SK-N-SH (cell line): ENCODE measurements at regions of chr1 and their contacts with region 1.

Region 1: DNA sequence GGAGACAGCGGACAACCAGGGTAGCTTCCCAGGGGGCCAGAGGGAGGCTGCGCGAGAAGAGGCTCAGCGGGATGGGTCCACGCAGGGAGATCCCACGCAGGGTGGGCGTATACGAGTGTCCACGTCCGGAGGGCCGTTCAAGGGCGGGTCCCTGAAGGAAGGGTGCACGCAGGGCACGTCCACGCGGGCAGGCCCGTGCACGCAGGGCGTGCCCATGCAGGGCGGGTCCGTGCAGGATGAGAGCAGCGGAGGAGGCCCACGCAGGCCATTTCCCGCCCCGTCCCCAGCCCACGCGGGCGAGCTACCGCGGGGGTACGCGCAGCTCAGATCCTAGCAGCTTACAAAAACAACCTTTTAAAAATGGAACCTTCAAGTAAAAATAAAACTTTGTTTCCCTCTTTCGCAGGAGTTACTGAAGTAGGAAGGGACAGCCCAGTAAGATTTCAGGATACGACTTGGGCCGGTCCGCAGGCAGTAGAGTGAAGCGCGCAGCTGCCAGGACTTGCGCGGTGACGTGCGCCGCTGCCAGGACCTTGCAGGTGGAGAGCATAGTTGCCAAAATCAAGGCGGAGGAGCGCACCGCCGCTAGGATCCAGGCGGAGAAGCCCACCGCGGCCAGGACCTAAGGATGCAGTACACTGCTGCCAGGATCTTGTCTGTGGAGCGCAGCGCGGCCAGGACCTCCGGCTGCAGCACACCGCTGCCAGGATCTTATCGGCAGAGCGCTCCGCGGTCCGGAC is 416 bp upstream of the RNF187 start:
- DNase-seq: peak; percentile 80
- H3K4me3 ChIP-seq: peak overlapping the region; percentile 79 to 96
- H3K27ac ChIP-seq: peak overlapping the region; percentile 90 to 97
- H3K4me1 ChIP-seq: peaks cover 0 to 10% of the 10 kb centered on the region in 2 experiments; a peak in 2 of 4 replicates
- H3K27me3 ChIP-seq: no peaks in the 10 kb centered on the region
- CTCF ChIP-seq: no peak
- EP300 ChIP-seq: no peak
- RAD21 ChIP-seq: no peak

Region 2: GRCh38 chr1:228464487-228464983 is 22.2 kb before region 1 on chr1:
- CTCF ChIA-PET with region 1: interaction called, 11 read pairs
- POLR2A ChIA-PET with region 1: interaction called, 4 read pairs
- DNase-seq: peak; percentile 93
- H3K4me3 ChIP-seq: peak overlapping the region; percentile 65 to 68
- H3K27ac ChIP-seq: peak overlapping the region in 1 of 2 experiments; percentile 95; a peak in 2 of 4 replicates
- H3K4me1 ChIP-seq: peaks cover 0 to 19% of the 10 kb centered on the region in 2 experiments; a peak in 2 of 4 replicates
- H3K27me3 ChIP-seq: no peaks in the 10 kb centered on the region
- CTCF ChIP-seq: no peak
- EP300 ChIP-seq: no peak
- RAD21 ChIP-seq: no peak